ENCODE measurements at regions of chrX and their contacts with region 1.

Region 1: GRCh38 chrX:9456250-9457074 is 8.4 kb upstream of the TBL1X start:
- DNase-seq: no peak
- ATAC-seq: no peak
- H3K4me3 ChIP-seq: no peak overlapping the region
- H3K27ac ChIP-seq: peak overlapping the region in 1 of 10 donors; percentile 36
- H3K4me1 ChIP-seq: peaks cover 0 to 5% (median 0%) of the 10 kb centered on the region in 9 donors
- H3K27me3 ChIP-seq: peaks cover 0 to 19% (median 0%) of the 10 kb centered on the region in 7 donors
- CTCF ChIP-seq: no peak

Region 2: GRCh38 chrX:8981723-8982122 is 474.7 kb before region 1 on chrX:
- intact Hi-C with region 1: loop called in 1 of 10 experiments (anchors 5 kb)
- DNase-seq: no peak
- ATAC-seq: no peak
- H3K4me3 ChIP-seq: no peak overlapping the region
- H3K27ac ChIP-seq: no peak overlapping the region
- H3K4me1 ChIP-seq: no peaks in the 10 kb centered on the region
- H3K27me3 ChIP-seq: peaks cover 0 to 52% (median 0%) of the 10 kb centered on the region in 7 donors
- CTCF ChIP-seq: no peak

Region 3: DNA sequence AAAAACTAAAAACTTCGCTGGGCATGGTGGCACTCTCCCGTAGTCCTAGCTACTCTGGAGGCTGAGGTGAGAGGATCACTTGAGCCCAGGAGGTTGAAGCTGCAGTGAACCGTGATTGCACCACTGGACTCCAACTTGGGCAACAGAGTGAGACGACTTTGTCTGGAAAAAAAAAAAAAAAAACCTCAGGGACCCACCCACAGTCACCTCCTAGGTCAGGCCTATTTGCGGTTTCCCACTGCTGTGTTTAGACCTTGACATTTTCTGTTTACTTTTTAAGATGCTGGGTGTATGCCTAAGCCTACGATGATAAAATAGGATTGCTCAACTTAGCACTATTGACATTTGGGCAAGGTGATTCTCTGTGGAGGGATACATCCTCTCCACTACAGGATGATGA is 189.0 kb before region 1 on chrX:
- intact Hi-C with region 1: no loop called
- DNase-seq: no peak
- ATAC-seq: no peak
- H3K4me3 ChIP-seq: no peak overlapping the region
- H3K27ac ChIP-seq: no peak overlapping the region
- H3K4me1 ChIP-seq: no peaks in the 10 kb centered on the region
- H3K27me3 ChIP-seq: peaks cover 0 to 39% (median 0%) of the 10 kb centered on the region in 7 donors
- CTCF ChIP-seq: no peak

Measured in heart right ventricle (tissue), 16 donors.